ENCODE measurements at regions of chr12 and their contacts with region 1.

Region 1: DNA sequence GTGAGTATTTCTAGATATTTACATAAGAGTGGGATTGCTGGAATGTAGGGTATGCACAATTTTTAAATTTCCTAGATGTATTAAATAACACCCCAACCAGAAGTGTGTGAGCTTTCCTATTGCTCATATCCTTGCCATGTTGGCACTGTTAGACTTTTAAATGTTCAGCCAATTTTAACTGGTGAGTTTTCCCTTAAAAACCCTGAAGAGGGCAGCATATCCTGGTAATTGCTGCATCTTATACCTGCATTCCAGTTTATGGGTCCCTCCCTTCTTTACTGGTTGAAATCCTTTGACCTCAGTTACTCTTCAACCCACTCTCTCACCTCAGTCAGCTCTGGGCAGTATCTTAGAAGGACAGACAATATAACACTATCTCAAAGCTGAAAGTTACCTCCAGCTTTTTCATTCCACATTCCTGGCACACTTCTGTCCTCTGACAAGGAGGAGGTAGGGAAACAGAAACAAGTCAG is 270.6 kb downstream of the PAWR start:
- DNase-seq: peak; percentile 84
- H3K4me3 ChIP-seq: no peak overlapping the region
- H3K27me3 ChIP-seq: no peaks in the 10 kb centered on the region
- CTCF ChIP-seq: peak; percentile 62

Region 2: GRCh38 chr12:79407671-79408622 is 12.2 kb before region 1 on chr12:
- CTCF ChIA-PET with region 1: interaction called, 12 read pairs
- POLR2A ChIA-PET with region 1: interaction called, 4 read pairs
- DNase-seq: no peak
- H3K4me3 ChIP-seq: no peak overlapping the region
- H3K27me3 ChIP-seq: no peaks in the 10 kb centered on the region
- CTCF ChIP-seq: peak; percentile 85

Region 3: DNA sequence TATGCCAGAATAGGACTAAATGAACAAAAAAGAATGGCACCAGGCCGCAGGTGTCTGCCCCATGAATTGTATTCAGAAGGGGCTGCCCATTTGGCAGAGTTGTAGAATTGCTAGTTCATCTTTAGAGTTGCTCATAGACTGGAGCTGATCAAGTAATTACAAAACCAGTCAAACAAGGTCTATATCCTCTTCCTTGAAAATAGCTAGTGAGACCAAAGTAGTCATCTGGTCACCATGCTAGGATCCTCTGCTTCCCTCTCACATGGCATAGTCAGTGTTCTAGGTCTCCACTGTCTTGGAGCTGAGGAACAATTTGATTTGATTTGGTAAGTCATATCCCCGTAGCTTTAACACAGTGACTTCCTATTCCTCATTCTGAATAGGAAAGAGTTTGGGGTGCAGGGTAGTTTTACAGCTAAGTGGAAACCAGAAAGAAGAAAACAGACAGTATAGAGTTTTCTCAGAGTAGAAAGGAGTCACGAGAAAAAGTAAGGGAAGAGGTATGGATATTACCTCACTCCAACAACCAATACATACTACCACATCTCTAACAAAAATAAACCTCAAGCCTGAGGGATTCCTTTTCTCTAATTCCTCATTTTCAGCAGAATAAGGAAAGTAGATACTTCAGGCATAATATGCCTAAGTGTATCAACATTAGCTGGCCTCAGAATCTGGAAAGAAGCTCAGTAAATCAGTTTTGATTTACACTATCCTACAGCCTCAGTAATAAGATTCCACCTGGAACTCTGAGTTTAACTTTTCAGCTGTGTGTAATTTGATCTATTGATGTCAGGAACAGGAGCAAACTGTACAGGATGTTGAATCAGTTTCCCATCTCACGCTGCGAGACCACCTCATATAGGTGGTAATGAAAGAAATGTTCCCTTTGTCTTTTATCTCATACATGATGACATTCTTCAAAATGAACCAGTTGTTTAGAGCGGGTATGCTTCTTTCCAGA is 18.6 kb after region 1 on chr12:
- CTCF ChIA-PET with region 1: interaction called, 11 read pairs
- POLR2A ChIA-PET with region 1: no interaction called
- DNase-seq: no peak
- H3K4me3 ChIP-seq: no peak overlapping the region
- H3K27me3 ChIP-seq: no peaks in the 10 kb centered on the region
- CTCF ChIP-seq: no peak

Region 4: GRCh38 chr12:79547735-79548609 is 127.8 kb after region 1 on chr12:
- CTCF ChIA-PET with region 1: interaction called, 27 read pairs
- POLR2A ChIA-PET with region 1: interaction called, 7 read pairs
- DNase-seq: peak; percentile 37
- H3K4me3 ChIP-seq: no peak overlapping the region
- H3K27me3 ChIP-seq: no peaks in the 10 kb centered on the region
- CTCF ChIP-seq: peak; percentile 71

Region 5: GRCh38 chr12:80186727-80187217 is 766.6 kb after region 1 on chr12:
- CTCF ChIA-PET with region 1: interaction called, 17 read pairs
- POLR2A ChIA-PET with region 1: no interaction called
- DNase-seq: peak; percentile 72
- H3K4me3 ChIP-seq: no peak overlapping the region
- H3K27me3 ChIP-seq: no peaks in the 10 kb centered on the region
- CTCF ChIP-seq: peak; percentile 83

Region 6: DNA sequence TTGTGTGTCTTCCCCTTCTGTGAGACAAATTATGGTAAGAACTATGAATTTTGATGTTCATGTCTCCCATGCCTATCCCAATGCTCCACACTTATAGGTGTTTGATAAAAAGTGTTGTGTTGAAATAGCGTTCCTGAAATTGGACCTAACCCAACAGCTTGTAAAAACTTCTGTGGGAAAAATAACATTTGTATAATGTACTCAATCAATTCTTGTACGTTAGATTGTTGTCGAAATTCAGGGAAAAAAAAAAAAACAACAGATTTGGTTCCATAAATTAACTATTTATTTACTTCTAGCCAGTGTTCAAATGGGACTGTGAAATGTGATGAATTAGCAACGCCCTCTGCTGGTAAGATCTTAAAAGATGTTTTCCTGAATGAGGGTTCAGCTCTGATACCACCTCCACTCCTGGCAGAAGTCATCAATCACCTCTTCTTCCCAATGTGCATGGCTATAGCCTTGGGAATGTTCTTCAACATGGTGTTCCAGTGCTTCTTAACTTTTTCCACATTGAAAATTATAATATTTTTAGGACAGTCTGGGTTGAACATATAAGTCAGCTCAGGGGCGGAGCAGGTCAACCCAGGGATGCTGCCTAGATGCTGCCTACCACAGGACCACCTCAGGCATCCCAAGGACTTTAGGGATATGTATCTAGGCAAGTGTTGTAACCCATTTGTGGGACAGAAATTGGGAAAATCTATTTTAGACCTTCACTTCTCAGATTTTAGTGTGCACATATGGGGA is 849.8 kb after region 1 on chr12:
- CTCF ChIA-PET with region 1: interaction called, 14 read pairs
- POLR2A ChIA-PET with region 1: interaction called, 8 read pairs
- DNase-seq: no peak
- H3K4me3 ChIP-seq: no peak overlapping the region
- H3K27me3 ChIP-seq: no peaks in the 10 kb centered on the region
- CTCF ChIP-seq: peak; percentile 59